ENCODE measurements at regions of chrX and their contacts with region 1.

Region 1: GRCh38 chrX:131792789-131793462 is 230.2 kb upstream of the STK26 start:
- DNase-seq: peak; percentile 95
- H3K4me3 ChIP-seq: peak overlapping the region in 2 of 4 donors; percentile 21 to 47
- H3K27ac ChIP-seq: peak overlapping the region in 2 of 4 donors; percentile 79 to 88
- H3K4me1 ChIP-seq: peaks cover 0 to 4% (median 1%) of the 10 kb centered on the region in 4 donors
- H3K27me3 ChIP-seq: no peaks in the 10 kb centered on the region
- CTCF ChIP-seq: peak in 1 of 4 experiments; percentile 45
- EP300 ChIP-seq: no peak
- POLR2A ChIP-seq: no peak

Region 2: GRCh38 chrX:131704136-131704695 is 88.7 kb before region 1 on chrX:
- intact Hi-C with region 1: loop called (anchors 2 kb)
- DNase-seq: peak; percentile 96
- H3K4me3 ChIP-seq: peak overlapping the region in 2 of 4 donors; percentile 32 to 48
- H3K27ac ChIP-seq: peak overlapping the region in 2 of 4 donors; percentile 36 to 76
- H3K4me1 ChIP-seq: no peaks in the 10 kb centered on the region
- H3K27me3 ChIP-seq: no peaks in the 10 kb centered on the region
- CTCF ChIP-seq: peak in 1 of 4 experiments; percentile 80
- EP300 ChIP-seq: no peak
- POLR2A ChIP-seq: no peak

Region 3: GRCh38 chrX:131728295-131729145 is 64.4 kb before region 1 on chrX:
- intact Hi-C with region 1: loop called (anchors 2 kb)
- DNase-seq: peak; percentile 91
- H3K4me3 ChIP-seq: peak overlapping the region in 2 of 4 donors; percentile 28 to 49
- H3K27ac ChIP-seq: peak overlapping the region in 2 of 4 donors; percentile 84 to 85
- H3K4me1 ChIP-seq: peaks cover 0 to 3% (median 0%) of the 10 kb centered on the region in 4 donors
- H3K27me3 ChIP-seq: no peaks in the 10 kb centered on the region
- CTCF ChIP-seq: peak in 1 of 4 experiments; percentile 67
- EP300 ChIP-seq: no peak
- POLR2A ChIP-seq: no peak

Region 4: DNA sequence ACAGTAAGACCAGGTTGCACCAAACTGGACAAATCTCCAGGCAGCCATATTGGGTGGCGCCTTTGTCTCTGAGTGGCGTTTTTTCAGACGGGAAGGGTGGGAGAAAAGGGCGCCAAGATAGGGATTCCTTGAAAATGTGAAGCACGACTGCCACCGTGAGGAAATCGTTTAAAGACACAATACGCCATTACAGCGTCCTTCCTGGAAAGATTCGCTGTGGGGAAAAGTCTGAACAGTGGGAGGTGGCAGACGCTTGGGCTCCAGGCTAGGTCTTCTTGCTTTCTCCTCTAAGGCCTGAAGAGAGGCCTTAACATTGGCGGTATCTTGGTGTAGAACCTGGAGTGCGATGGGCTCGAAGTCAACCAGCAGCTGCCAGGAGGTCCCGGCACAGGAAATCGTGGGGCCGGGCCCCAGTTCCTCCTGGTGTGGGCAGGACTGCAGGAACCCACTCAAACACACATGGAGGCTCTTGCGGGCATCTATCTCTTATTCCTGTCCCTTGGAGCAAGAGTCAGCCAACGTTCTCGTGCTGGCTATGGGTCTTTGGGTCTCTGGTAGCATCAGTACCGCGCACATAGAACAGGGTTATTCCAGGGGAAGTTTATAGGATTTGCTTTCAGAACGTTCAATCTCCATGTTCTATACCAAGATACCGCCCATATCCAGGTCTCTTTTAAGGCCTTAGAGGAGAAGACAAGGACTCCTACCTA is 40.3 kb before region 1 on chrX:
- intact Hi-C with region 1: loop called (anchors 5 kb)
- DNase-seq: peak; percentile 92
- H3K4me3 ChIP-seq: peak overlapping the region in 2 of 4 donors; percentile 24 to 51
- H3K27ac ChIP-seq: peak overlapping the region in 2 of 4 donors; percentile 75 to 81
- H3K4me1 ChIP-seq: no peaks in the 10 kb centered on the region
- H3K27me3 ChIP-seq: no peaks in the 10 kb centered on the region
- CTCF ChIP-seq: no peak
- EP300 ChIP-seq: no peak
- POLR2A ChIP-seq: no peak

Measured in sigmoid colon (tissue), 7 donors.